Lower lobe of right lung (tissue), 2 donors: ENCODE measurements at regions of chr21 and their contacts with region 1.

Region 1: DNA sequence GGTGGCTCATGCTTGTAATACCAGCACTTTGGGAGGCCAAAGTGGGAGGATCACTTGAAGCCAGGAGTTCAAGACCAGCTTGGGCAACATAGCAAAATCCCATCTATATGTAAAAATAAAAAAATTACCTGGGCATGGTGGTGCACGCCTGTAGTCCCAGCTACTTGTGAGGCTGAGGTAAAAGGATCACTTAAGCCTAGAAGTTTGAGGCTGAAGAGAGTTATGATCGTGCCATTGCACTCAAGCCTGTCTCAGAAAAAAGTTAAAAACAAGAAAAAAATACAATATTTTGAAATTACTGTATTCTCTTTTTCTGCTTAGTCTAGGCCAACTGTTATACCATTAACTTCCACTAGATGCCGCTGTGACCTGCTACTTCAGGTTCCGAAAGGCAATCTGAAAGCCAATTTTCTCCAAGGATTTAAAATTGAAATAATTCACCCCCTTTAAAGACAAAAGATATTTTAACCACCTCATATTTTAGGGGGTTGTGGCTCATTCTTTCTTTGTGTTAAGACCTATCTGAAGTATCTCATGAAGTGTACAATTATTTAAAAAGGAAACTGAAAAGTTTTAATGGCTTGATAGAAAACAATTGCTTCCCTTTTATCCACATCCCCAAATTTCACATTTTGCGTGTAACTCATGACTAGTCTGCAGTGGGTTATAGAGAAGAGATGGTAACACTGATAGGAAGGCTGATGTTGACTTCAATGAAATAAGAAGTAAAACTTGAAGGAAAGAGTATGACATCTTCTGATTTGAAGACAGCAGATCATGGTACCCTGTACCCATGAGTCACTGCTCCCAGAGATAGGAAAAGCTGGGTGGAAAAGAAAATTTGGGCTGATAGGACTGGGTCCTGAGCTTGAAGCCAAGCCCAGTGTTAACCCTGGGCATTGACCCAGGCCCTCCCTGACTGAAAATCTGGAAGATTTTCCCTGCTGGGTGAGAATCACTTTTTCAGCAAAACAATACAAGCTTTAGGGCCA is 24.4 kb upstream of the CLDN14 start:
- DNase-seq: no peak
- ATAC-seq: peak in 1 of 2 donors; percentile 49
- H3K4me3 ChIP-seq: no peak overlapping the region
- H3K27ac ChIP-seq: no peak overlapping the region
- H3K4me1 ChIP-seq: no peaks in the 10 kb centered on the region
- H3K27me3 ChIP-seq: no peaks in the 10 kb centered on the region
- CTCF ChIP-seq: peak; percentile 94

Region 2: DNA sequence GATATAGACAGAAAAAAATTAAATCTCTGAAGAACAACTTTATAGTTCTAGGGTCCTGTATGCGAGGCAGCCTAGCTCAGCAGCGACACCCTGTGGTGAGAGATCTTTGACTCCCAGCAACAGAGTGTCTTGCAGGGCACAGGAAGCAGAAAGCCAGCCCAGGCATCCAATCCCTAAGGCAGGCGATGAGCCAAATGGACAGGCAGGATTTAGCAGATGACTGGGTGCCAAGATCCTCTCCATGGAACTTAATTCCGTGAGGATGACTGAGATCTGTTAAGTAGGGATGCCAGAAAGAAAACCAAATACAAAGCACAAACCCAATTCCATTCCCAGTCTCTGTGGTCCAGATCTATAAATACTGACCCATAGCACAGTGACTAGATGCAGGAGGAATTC is 423.4 kb after region 1 on chr21:
- intact Hi-C with region 1: loop called (anchors 10 kb)
- DNase-seq: peak; percentile 73
- ATAC-seq: peak; percentile 79 to 81
- H3K4me3 ChIP-seq: no peak overlapping the region
- H3K27ac ChIP-seq: no peak overlapping the region
- H3K4me1 ChIP-seq: peaks cover 6% of the 10 kb centered on the region
- H3K27me3 ChIP-seq: no peaks in the 10 kb centered on the region
- CTCF ChIP-seq: peak; percentile 91